HAP-1 (cell line): ENCODE measurements at regions of chr13 and their contacts with region 1.

Region 1: DNA sequence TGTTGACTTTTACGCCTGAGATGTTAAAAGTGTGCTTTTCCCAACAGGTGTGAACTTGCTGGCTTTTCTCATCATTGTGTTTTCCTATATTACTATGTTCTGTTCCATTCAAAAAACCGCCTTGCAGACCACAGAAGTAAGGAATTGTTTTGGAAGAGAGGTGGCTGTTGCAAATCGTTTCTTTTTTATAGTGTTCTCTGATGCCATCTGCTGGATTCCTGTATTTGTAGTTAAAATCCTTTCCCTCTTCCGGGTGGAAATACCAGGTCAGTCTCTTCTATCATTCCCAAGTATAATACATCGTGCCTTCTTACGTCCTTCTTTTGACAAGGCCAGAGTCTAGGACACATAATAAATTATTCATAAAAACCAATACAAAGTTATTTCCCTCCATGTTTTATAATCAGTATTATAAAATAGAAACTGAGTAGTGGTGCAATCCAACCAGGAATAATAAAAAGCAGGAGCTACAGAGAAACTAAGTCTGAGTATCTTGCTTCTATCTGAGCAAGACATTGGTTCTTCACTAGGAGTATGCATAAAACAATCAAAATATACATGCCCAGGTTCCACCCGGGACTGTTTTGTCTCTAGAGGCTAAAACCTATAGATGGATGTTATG is 57.9 kb downstream of the RXFP2 start:
- DNase-seq: peak in 1 of 2 experiments; percentile 69
- H3K4me3 ChIP-seq: no peak overlapping the region
- H3K4me1 ChIP-seq: peaks cover 6% of the 10 kb centered on the region
- H3K27me3 ChIP-seq: no peaks in the 10 kb centered on the region

Region 2: GRCh38 chr13:31050486-31051400 is 746.5 kb before region 1 on chr13:
- in situ Hi-C with region 1: no loop called
- DNase-seq: no peak
- H3K4me3 ChIP-seq: no peak overlapping the region
- H3K4me1 ChIP-seq: peaks cover 11% of the 10 kb centered on the region
- H3K27me3 ChIP-seq: no peaks in the 10 kb centered on the region; the same call in 1 of the 2 replicates

Region 3: GRCh38 chr13:31174018-31174417 is 623.2 kb before region 1 on chr13:
- in situ Hi-C with region 1: no loop called
- DNase-seq: no peak
- H3K4me3 ChIP-seq: no peak overlapping the region
- H3K4me1 ChIP-seq: peaks cover 5% of the 10 kb centered on the region; the same call in 1 of the 2 replicates
- H3K27me3 ChIP-seq: no peaks in the 10 kb centered on the region

Region 4: GRCh38 chr13:31431722-31432137 is 365.5 kb before region 1 on chr13:
- in situ Hi-C with region 1: loop called (anchors 10 kb)
- DNase-seq: peak; percentile 20 to 77
- H3K4me3 ChIP-seq: no peak overlapping the region
- H3K4me1 ChIP-seq: no peaks in the 10 kb centered on the region
- H3K27me3 ChIP-seq: no peaks in the 10 kb centered on the region